CD4-positive, alpha-beta memory T cell (primary cell): ENCODE measurements at regions of chr11 and their contacts with region 1.

Region 1: DNA sequence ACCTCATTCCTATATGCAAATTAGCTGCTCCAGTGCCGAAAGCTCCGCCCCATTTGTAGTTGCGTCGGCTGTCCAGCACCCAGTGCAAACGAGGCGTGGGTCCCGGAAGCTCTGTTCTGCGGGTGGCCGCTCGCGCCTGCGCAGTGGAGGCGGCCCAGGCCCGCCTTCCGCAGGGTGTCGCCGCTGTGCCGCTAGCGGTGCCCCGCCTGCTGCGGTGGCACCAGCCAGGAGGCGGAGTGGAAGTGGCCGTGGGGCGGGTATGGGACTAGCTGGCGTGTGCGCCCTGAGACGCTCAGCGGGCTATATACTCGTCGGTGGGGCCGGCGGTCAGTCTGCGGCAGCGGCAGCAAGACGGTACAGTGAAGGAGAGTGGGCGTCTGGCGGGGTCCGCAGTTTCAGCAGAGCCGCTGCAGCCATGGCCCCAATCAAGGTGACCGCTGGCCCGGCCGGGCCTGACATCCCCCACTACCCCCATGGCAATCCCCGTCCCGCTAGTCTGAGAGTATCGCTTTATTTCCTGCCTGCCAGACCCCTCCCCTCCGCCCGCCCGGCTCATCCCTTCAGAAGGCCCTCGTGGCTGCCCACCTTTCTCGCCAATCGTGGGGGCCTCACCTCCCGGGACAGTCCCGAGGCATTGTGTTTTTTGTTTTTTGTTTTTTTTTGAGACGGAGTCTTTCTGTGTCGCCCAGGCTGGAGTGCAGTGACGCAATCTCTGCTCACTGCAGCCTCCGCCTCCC is at the start of gene PRDX5:
- DNase-seq: peak; percentile 96 to 98 (median 97)
- H3K4me3 ChIP-seq: peak within 1 kb of the TSS; percentile 68 to 72
- H3K4me3 Mint-ChIP-seq: peak within 1 kb of the TSS; percentile 95 to 99 (median 96)
- H3K27ac ChIP-seq: peak within 1 kb of the TSS; percentile 96
- H3K27ac Mint-ChIP-seq: peak within 1 kb of the TSS; percentile 97 to 100 (median 100)
- H3K4me1 ChIP-seq: peaks cover 26% of the 10 kb centered on the region
- H3K4me1 Mint-ChIP-seq: peaks cover 17 to 44% (median 29%) of the 10 kb centered on the region in 4 donors
- H3K27me3 ChIP-seq: no peaks in the 10 kb centered on the region
- H3K27me3 Mint-ChIP-seq: no peaks in the 10 kb centered on the region
- total RNA-seq, gene PRDX5: 57.6 to 58.7 TPM

Region 2: DNA sequence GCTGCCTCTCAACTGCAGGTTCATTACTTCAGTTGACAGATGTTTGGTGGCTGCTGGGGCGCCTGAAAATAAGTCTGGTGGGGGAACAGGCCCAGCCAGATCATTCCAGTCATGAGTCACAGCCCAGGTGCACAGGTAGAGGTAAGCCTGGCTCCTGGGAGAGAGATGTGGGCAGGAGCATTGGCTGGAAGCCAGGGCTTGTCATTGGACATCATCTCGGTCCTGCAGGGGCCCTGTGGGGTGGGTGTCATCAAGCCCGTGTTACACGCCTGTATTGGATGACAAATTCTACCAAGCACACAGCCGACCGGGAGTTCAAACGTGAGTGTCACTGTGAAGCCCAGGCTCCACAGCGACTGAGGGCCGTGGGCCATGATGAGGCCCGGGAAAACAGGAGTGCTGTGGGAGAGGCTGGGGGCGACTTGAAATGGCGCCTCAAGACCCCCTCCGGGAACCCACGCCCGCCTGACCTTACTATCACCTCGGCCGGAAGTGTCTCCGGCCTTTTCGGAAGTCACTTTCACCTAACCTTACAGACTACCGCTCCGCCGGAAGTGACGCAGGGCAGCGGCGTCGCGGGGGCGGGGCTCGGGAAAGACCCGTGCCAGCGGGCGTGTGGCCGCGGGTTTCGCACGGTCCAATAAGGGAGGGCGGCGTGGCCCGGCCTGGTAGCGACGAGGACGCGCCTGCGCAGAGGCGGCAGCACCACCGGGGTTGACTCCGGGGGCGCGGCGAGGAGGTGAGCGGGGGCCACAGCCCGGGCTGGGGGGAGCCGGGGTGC is 77.5 kb before region 1 on chr11 and contains the start of gene FKBP2:
- CTCF ChIA-PET with region 1: interaction called, 5 read pairs
- POLR2A ChIA-PET with region 1: interaction called, 23 read pairs
- intact Hi-C with region 1: no loop called
- DNase-seq: peak; percentile 97 to 99 (median 99)
- H3K4me3 ChIP-seq: peak within 1 kb of the TSS; percentile 67 to 73
- H3K4me3 Mint-ChIP-seq: peak within 1 kb of the TSS; percentile 87 to 97 (median 88)
- H3K27ac ChIP-seq: peak within 1 kb of the TSS; percentile 99
- H3K27ac Mint-ChIP-seq: peak within 1 kb of the TSS; percentile 99 to 100 (median 100)
- H3K4me1 ChIP-seq: peaks cover 38% of the 10 kb centered on the region
- H3K4me1 Mint-ChIP-seq: peaks cover 14 to 52% (median 29%) of the 10 kb centered on the region in 4 donors
- H3K27me3 ChIP-seq: no peaks in the 10 kb centered on the region
- H3K27me3 Mint-ChIP-seq: no peaks in the 10 kb centered on the region
- total RNA-seq, gene FKBP2: 41.4 to 46.4 TPM

Region 3: DNA sequence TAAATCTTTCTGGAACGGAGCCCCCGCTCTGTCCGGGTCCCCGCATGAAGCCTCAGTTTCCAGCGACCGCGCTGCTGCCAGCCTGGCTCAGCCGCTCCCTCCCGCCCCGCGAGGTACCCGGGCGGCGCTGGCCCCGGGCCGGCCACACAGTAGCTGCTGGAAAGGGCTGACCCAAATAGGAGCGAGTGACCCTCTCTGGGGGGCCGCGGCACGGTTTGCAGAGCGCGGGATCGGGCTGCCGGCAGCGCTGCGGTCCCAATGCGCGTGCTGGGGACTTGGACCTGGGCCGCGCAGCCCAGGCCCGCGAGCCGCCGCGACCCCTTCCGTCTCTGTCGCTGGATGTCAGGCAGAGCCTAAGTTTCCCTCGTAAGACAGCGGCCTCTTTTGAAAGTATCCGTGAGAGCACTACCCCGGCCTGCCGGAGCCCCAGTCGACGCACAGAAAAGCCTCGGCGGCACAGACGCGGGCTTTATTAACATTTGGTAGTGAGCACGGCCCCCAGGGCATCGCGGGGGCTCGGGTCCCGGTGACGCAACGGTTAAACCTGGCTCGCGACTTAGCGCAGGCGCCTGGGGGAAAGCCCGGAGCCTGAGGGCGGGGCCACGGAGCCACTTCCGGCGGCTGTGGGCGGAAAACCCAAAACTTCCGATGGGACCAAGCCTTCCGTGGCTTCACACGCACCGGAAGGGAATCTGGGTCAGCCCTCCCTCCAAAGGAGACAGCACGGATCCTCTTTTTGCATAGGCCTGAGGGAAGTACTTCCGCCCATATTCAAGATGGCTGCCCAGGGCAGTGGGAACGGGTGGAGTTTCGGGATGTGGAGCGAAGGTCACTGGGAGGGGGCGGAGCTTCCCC is 48.5 kb before region 1 on chr11:
- CTCF ChIA-PET with region 1: interaction called, 6 read pairs
- POLR2A ChIA-PET with region 1: interaction called, 64 read pairs
- intact Hi-C with region 1: loop called (anchors 1 kb)
- DNase-seq: peak; percentile 98
- H3K4me3 ChIP-seq: peak overlapping the region; percentile 93 to 98
- H3K4me3 Mint-ChIP-seq: peak overlapping the region; percentile 93 to 100 (median 96)
- H3K27ac ChIP-seq: peak overlapping the region; percentile 93
- H3K27ac Mint-ChIP-seq: peak overlapping the region; percentile 98 to 100 (median 99)
- H3K4me1 ChIP-seq: peaks cover 20% of the 10 kb centered on the region
- H3K4me1 Mint-ChIP-seq: peaks cover 9 to 36% (median 19%) of the 10 kb centered on the region in 4 donors
- H3K27me3 ChIP-seq: no peaks in the 10 kb centered on the region
- H3K27me3 Mint-ChIP-seq: peaks cover 0 to 4% of the 10 kb centered on the region in 2 donors

Region 4: GRCh38 chr11:64331557-64332371 is 13.6 kb after region 1 on chr11:
- CTCF ChIA-PET with region 1: interaction called, 49 read pairs
- POLR2A ChIA-PET with region 1: interaction called, 153 read pairs
- intact Hi-C with region 1: loop called (anchors 1 kb)
- DNase-seq: peak; percentile 47 to 73 (median 54)
- H3K4me3 ChIP-seq: no peak overlapping the region
- H3K4me3 Mint-ChIP-seq: peak overlapping the region in 4 of 8 donors; percentile 7 to 38 (median 36)
- H3K27ac ChIP-seq: no peak overlapping the region
- H3K27ac Mint-ChIP-seq: peak overlapping the region; percentile 11 to 92 (median 71)
- H3K4me1 ChIP-seq: peaks cover 12% of the 10 kb centered on the region
- H3K4me1 Mint-ChIP-seq: peaks cover 5 to 11% (median 8%) of the 10 kb centered on the region in 4 donors
- H3K27me3 ChIP-seq: no peaks in the 10 kb centered on the region
- H3K27me3 Mint-ChIP-seq: no peaks in the 10 kb centered on the region

Region 5: GRCh38 chr11:64358907-64359711 is 41.0 kb after region 1 on chr11 and contains the start of gene RPS6KA4:
- CTCF ChIA-PET with region 1: interaction called, 24 read pairs
- POLR2A ChIA-PET with region 1: interaction called, 69 read pairs
- intact Hi-C with region 1: loop called (anchors 5 kb)
- DNase-seq: peak in 3 of 5 donors; percentile 36 to 53 (median 50)
- H3K4me3 ChIP-seq: peak within 1 kb of the TSS; percentile 47 to 53
- H3K4me3 Mint-ChIP-seq: peak within 1 kb of the TSS; percentile 89 to 96 (median 94)
- H3K27ac ChIP-seq: peak within 1 kb of the TSS; percentile 62
- H3K27ac Mint-ChIP-seq: peak within 1 kb of the TSS; percentile 65 to 95 (median 80)
- H3K4me1 ChIP-seq: peaks cover 30% of the 10 kb centered on the region
- H3K4me1 Mint-ChIP-seq: peaks cover 17 to 45% (median 23%) of the 10 kb centered on the region in 4 donors
- H3K27me3 ChIP-seq: no peaks in the 10 kb centered on the region
- H3K27me3 Mint-ChIP-seq: no peaks in the 10 kb centered on the region
- total RNA-seq, gene RPS6KA4: 33.9 to 38.7 TPM